AG04450 (cell line): ENCODE measurements at regions of chr5 and their contacts with region 1.

Region 1: GRCh38 chr5:87400305-87400899 is 12.3 kb downstream of the CCNH start:
- DNase-seq: no peak
- H3K4me3 ChIP-seq: no peak overlapping the region
- H3K27ac ChIP-seq: no peak overlapping the region
- H3K27me3 ChIP-seq: no peaks in the 10 kb centered on the region
- CTCF ChIP-seq: peak; percentile 66

Region 2: GRCh38 chr5:85466423-85466822 is 1934.0 kb before region 1 on chr5:
- CTCF ChIA-PET with region 1: interaction called, 12 read pairs
- POLR2A ChIA-PET with region 1: no interaction called
- DNase-seq: no peak
- H3K4me3 ChIP-seq: no peak overlapping the region
- H3K27ac ChIP-seq: no peak overlapping the region
- H3K27me3 ChIP-seq: no peaks in the 10 kb centered on the region
- CTCF ChIP-seq: no peak

Region 3: DNA sequence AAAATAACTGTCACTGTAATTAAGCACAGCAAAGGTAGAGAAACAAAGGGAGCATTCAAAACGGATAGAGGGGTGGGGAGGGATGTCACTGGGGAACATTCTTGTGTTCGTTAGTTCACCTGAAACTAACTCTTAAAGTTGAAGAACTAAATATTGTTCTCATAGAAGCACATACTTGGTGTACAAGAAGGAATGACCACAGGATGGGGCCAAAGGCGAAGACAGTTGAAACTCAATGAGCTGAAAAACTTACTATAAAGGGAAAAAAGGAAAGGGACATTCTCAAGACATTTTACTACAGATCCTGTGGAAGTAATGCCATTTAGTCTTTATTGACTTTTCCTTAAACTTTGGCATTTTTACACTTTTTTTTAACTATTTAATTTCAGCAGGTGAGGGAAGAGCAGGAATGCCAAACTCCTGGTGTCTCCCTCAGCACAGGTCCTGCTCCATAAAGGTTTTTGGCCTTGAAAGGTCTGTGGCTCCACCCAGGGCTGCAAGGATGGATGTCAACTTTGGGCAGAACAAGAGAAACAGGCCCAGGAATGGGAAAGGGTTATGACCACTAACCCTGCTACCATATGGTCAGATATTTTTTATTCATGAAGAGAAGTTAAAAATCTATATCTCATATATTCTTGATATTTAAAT is 330.3 kb before region 1 on chr5:
- CTCF ChIA-PET with region 1: interaction called, 80 read pairs
- POLR2A ChIA-PET with region 1: no interaction called
- DNase-seq: peak; percentile 36
- H3K4me3 ChIP-seq: no peak overlapping the region
- H3K27ac ChIP-seq: no peak overlapping the region
- H3K27me3 ChIP-seq: no peaks in the 10 kb centered on the region
- CTCF ChIP-seq: peak; percentile 68

Region 4: DNA sequence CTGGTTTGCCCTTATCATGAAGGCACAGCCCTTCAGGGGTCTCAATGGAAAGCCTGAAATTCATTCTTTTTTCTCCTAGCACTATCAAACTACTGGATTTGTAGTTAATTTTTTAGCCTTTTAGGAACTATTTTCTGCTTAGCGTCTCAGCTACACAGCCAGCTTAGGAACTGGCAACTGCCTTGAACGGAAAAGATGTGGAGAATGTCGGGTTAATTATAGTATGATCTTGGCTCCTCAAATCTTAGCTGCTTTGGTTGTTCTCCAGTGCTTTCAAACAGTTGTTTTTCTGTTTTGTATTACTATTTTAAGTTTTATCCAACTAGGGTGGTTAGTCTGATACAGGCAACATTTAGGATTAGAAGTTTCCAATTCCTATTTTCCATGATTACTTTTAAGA is 31.8 kb before region 1 on chr5:
- CTCF ChIA-PET with region 1: interaction called, 16 read pairs
- POLR2A ChIA-PET with region 1: no interaction called
- DNase-seq: no peak
- H3K4me3 ChIP-seq: no peak overlapping the region
- H3K27ac ChIP-seq: no peak overlapping the region
- H3K27me3 ChIP-seq: no peaks in the 10 kb centered on the region
- CTCF ChIP-seq: no peak

Region 5: DNA sequence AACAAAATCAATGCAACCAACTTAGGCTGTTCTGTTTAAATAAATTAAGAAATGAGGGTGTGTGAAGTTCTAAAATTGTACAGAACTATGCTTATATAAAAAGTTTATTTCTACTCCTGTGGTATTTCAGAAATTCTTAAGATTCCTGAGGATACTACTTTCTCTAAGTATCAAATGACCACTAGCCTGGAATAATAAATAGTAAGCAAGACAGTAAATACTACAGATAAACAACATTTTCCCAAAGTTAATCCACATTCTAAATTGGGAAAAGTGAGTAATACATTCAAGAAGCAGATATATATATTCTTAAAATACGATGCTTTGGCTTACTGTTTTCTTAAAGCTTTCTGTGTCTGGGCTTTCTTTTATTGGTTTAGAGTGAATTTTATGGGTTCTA is 17.2 kb before region 1 on chr5:
- CTCF ChIA-PET with region 1: interaction called, 13 read pairs
- POLR2A ChIA-PET with region 1: no interaction called
- DNase-seq: peak; percentile 16
- H3K4me3 ChIP-seq: no peak overlapping the region
- H3K27ac ChIP-seq: no peak overlapping the region
- H3K27me3 ChIP-seq: no peaks in the 10 kb centered on the region
- CTCF ChIP-seq: no peak

Region 6: GRCh38 chr5:87390075-87390887 is 10.1 kb before region 1 on chr5:
- CTCF ChIA-PET with region 1: interaction called, 18 read pairs
- POLR2A ChIA-PET with region 1: no interaction called
- DNase-seq: no peak
- H3K4me3 ChIP-seq: no peak overlapping the region
- H3K27ac ChIP-seq: no peak overlapping the region
- H3K27me3 ChIP-seq: no peaks in the 10 kb centered on the region
- CTCF ChIP-seq: no peak

Region 7: GRCh38 chr5:87412630-87413342 is 12.4 kb after region 1 on chr5 and contains the start of gene CCNH:
- CTCF ChIA-PET with region 1: interaction called, 31 read pairs
- POLR2A ChIA-PET with region 1: interaction called, 8 read pairs
- DNase-seq: peak; percentile 94
- H3K4me3 ChIP-seq: peak within 1 kb of the TSS; percentile 96
- H3K27ac ChIP-seq: peak within 1 kb of the TSS; percentile 94
- H3K27me3 ChIP-seq: no peaks in the 10 kb centered on the region
- CTCF ChIP-seq: no peak
- polyA plus RNA-seq, gene CCNH: 41.4 and 53.8 TPM in 2 replicates